Activated CD4-positive, alpha-beta T cell treated with anti-CD3 and anti-CD28 coated beads for 36 hours (primary cell): ENCODE measurements at regions of chr17 and their contacts with region 1.

Region 1: GRCh38 chr17:82611140-82612058 is 36.8 kb downstream of the WDR45B start:
- DNase-seq: no peak
- ATAC-seq: peak; percentile 23
- H3K4me3 Mint-ChIP-seq: no peak overlapping the region
- H3K27ac Mint-ChIP-seq: no peak overlapping the region
- H3K4me1 Mint-ChIP-seq: no peaks in the 10 kb centered on the region
- H3K27me3 Mint-ChIP-seq: no peaks in the 10 kb centered on the region

Region 2: GRCh38 chr17:82461827-82462524 is 149.4 kb before region 1 on chr17:
- CTCF ChIA-PET with region 1: no interaction called
- POLR2A ChIA-PET with region 1: no interaction called
- intact Hi-C with region 1: no loop called
- DNase-seq: no peak
- ATAC-seq: no peak
- H3K4me3 Mint-ChIP-seq: no peak overlapping the region
- H3K27ac Mint-ChIP-seq: no peak overlapping the region
- H3K4me1 Mint-ChIP-seq: peaks cover 29% of the 10 kb centered on the region
- H3K27me3 Mint-ChIP-seq: no peaks in the 10 kb centered on the region

Region 3: GRCh38 chr17:82632451-82632850 is 21.1 kb after region 1 on chr17:
- CTCF ChIA-PET with region 1: interaction called, 3 read pairs
- POLR2A ChIA-PET with region 1: no interaction called
- intact Hi-C with region 1: loop called in 1 of 2 experiments (anchors 2 kb)
- DNase-seq: no peak
- ATAC-seq: no peak
- H3K4me3 Mint-ChIP-seq: no peak overlapping the region
- H3K27ac Mint-ChIP-seq: no peak overlapping the region
- H3K4me1 Mint-ChIP-seq: peaks cover 14% of the 10 kb centered on the region
- H3K27me3 Mint-ChIP-seq: no peaks in the 10 kb centered on the region